Activated CD4-positive, alpha-beta T cell treated with anti-CD3 and anti-CD28 coated beads for 36 hours (primary cell): ENCODE measurements at regions of chr10 and their contacts with region 1.

Region 1: GRCh38 chr10:3852147-3852904 is 67.3 kb upstream of the KLF6 start:
- DNase-seq: peak; percentile 83
- ATAC-seq: peak; percentile 93
- H3K4me3 Mint-ChIP-seq: peak overlapping the region; percentile 34
- H3K27ac Mint-ChIP-seq: peak overlapping the region; percentile 94
- H3K4me1 Mint-ChIP-seq: peaks cover 48% of the 10 kb centered on the region
- H3K27me3 Mint-ChIP-seq: no peaks in the 10 kb centered on the region

Region 2: GRCh38 chr10:3776796-3777571 is 75.3 kb before region 1 on chr10:
- CTCF ChIA-PET with region 1: no interaction called
- POLR2A ChIA-PET with region 1: interaction called, 46 read pairs
- intact Hi-C with region 1: loop called in 1 of 2 experiments (anchors 1 kb)
- DNase-seq: peak; percentile 71
- ATAC-seq: peak; percentile 68
- H3K4me3 Mint-ChIP-seq: peak overlapping the region; percentile 62
- H3K27ac Mint-ChIP-seq: peak overlapping the region; percentile 90
- H3K4me1 Mint-ChIP-seq: peaks cover 67% of the 10 kb centered on the region
- H3K27me3 Mint-ChIP-seq: no peaks in the 10 kb centered on the region

Region 3: GRCh38 chr10:3811291-3811870 is 40.9 kb before region 1 on chr10:
- CTCF ChIA-PET with region 1: interaction called, 21 read pairs
- POLR2A ChIA-PET with region 1: interaction called, 32 read pairs
- intact Hi-C with region 1: loop called (anchors 1 kb)
- DNase-seq: peak; percentile 78
- ATAC-seq: peak; percentile 62
- H3K4me3 Mint-ChIP-seq: peak overlapping the region; percentile 42
- H3K27ac Mint-ChIP-seq: no peak overlapping the region
- H3K4me1 Mint-ChIP-seq: peaks cover 80% of the 10 kb centered on the region
- H3K27me3 Mint-ChIP-seq: no peaks in the 10 kb centered on the region

Region 4: DNA sequence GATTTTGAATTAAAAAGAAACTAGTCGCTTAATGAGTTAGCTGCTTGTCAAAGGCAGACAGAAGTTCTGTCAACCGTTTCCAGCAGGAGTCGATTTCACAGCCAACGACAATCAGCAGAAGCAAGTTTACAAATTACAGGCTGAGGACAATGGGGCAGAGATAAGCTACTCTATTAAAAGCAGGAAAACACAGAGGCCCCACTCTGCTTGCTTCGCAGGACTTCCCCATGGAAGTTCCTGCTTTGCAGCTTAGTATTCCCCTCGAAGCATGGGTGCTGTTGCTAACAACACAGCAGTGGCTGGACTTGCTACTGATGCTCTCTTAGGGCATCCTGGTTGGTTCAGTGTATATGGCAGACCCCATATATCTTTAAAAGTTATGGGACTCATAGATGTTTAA is 16.6 kb before region 1 on chr10:
- CTCF ChIA-PET with region 1: interaction called, 4 read pairs
- POLR2A ChIA-PET with region 1: no interaction called
- intact Hi-C with region 1: loop called in 1 of 2 experiments (anchors 2 kb)
- DNase-seq: no peak
- ATAC-seq: peak; percentile 7
- H3K4me3 Mint-ChIP-seq: no peak overlapping the region
- H3K27ac Mint-ChIP-seq: peak overlapping the region; percentile 61
- H3K4me1 Mint-ChIP-seq: peaks cover 63% of the 10 kb centered on the region
- H3K27me3 Mint-ChIP-seq: no peaks in the 10 kb centered on the region

Region 5: GRCh38 chr10:4034907-4035598 is 182.7 kb after region 1 on chr10:
- CTCF ChIA-PET with region 1: no interaction called
- POLR2A ChIA-PET with region 1: no interaction called
- intact Hi-C with region 1: loop called in 1 of 2 experiments (anchors 5 kb)
- DNase-seq: peak; percentile 64
- ATAC-seq: peak; percentile 63
- H3K4me3 Mint-ChIP-seq: peak overlapping the region; percentile 49
- H3K27ac Mint-ChIP-seq: peak overlapping the region; percentile 90
- H3K4me1 Mint-ChIP-seq: peaks cover 30% of the 10 kb centered on the region
- H3K27me3 Mint-ChIP-seq: no peaks in the 10 kb centered on the region